Aorta (tissue), 5 donors: ENCODE measurements at regions of chr1 and their contacts with region 1.

Region 1: GRCh38 chr1:47067097-47067594 is at the start of gene CYP4Z1:
- DNase-seq: no peak
- ATAC-seq: no peak
- H3K4me3 ChIP-seq: no peak within 1 kb of the TSS
- H3K27ac ChIP-seq: no peak within 1 kb of the TSS
- H3K4me1 ChIP-seq: no peaks in the 10 kb centered on the region
- H3K27me3 ChIP-seq: no peaks in the 10 kb centered on the region
- total RNA-seq, gene CYP4Z1: 1.0 to 2.2 TPM

Region 2: GRCh38 chr1:47002211-47002610 is 64.9 kb before region 1 on chr1:
- intact Hi-C with region 1: no loop called
- DNase-seq: no peak
- ATAC-seq: no peak
- H3K4me3 ChIP-seq: no peak overlapping the region
- H3K27ac ChIP-seq: no peak overlapping the region
- H3K4me1 ChIP-seq: no peaks in the 10 kb centered on the region
- H3K27me3 ChIP-seq: no peaks in the 10 kb centered on the region

Region 3: DNA sequence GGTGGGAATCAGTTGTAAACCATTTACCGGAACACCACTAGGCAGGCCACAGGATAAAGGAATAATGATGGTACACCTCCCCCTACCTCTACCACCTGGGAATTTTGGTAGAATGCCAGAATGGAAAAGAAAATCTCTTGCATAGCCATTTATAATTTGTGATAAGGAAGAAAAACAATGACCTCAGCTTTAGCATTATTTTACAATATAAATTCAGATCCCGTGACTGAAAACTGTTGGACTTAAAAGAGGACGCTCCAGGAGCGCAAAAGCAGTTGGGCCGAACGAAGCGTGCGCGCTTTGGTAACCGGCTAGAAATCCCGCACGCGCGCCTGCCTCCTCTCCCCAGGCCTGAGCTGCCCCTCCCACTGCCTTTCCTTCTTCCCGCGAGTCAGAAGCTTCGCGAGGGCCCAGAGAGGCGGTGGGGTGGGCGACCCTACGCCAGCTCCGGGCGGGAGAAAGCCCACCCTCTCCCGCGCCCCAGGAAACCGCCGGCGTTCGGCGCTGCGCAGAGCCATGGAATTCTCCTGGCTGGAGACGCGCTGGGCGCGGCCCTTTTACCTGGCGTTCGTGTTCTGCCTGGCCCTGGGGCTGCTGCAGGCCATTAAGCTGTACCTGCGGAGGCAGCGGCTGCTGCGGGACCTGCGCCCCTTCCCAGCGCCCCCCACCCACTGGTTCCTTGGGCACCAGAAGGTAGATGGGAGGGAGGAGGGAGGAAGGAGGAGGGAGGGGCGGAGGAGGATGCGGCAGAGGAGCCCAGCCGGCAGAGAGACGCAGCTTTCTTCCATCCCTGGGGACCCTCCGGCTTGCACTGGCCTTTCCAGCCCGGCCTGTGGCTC is 43.6 kb before region 1 on chr1 and contains the start of gene CYP4X1:
- intact Hi-C with region 1: loop called in 1 of 2 experiments (anchors 5 kb)
- DNase-seq: peak; percentile 68 to 81
- ATAC-seq: peak; percentile 69
- H3K4me3 ChIP-seq: peak within 1 kb of the TSS; percentile 61 to 71
- H3K27ac ChIP-seq: peak within 1 kb of the TSS; percentile 89 to 93
- H3K4me1 ChIP-seq: peaks cover 11 to 13% of the 10 kb centered on the region in 2 donors
- H3K27me3 ChIP-seq: no peaks in the 10 kb centered on the region
- total RNA-seq, gene CYP4X1: 16.3 to 29.0 TPM